HepG2 (cell line): ENCODE measurements at regions of chr9 and their contacts with region 1.

Region 1: GRCh38 chr9:71985297-71985911 is 74.0 kb downstream of the C9orf85 start:
- DNase-seq: peak; percentile 25
- ATAC-seq: peak; percentile 93
- H3K4me3 ChIP-seq: no peak overlapping the region
- H3K27ac ChIP-seq: no peak overlapping the region
- H3K4me1 ChIP-seq: no peaks in the 10 kb centered on the region
- H3K27me3 ChIP-seq: no peaks in the 10 kb centered on the region
- CTCF ChIP-seq: peak; percentile 66
- EP300 ChIP-seq: no peak
- POLR2A ChIP-seq: no peak
- RAD21 ChIP-seq: no peak

Region 2: GRCh38 chr9:72022841-72023240 is 37.4 kb after region 1 on chr9:
- CTCF ChIA-PET with region 1: interaction called, 7 read pairs
- POLR2A ChIA-PET with region 1: no interaction called
- in situ Hi-C with region 1: no loop called
- intact Hi-C with region 1: loop called (anchors 1 kb)
- DNase-seq: no peak
- ATAC-seq: no peak
- H3K4me3 ChIP-seq: no peak overlapping the region
- H3K27ac ChIP-seq: no peak overlapping the region
- H3K4me1 ChIP-seq: peaks cover 11% of the 10 kb centered on the region
- H3K27me3 ChIP-seq: no peaks in the 10 kb centered on the region
- CTCF ChIP-seq: no peak
- EP300 ChIP-seq: no peak
- POLR2A ChIP-seq: no peak
- RAD21 ChIP-seq: no peak